ENCODE measurements at regions of chr14 and their contacts with region 1.

Region 1: DNA sequence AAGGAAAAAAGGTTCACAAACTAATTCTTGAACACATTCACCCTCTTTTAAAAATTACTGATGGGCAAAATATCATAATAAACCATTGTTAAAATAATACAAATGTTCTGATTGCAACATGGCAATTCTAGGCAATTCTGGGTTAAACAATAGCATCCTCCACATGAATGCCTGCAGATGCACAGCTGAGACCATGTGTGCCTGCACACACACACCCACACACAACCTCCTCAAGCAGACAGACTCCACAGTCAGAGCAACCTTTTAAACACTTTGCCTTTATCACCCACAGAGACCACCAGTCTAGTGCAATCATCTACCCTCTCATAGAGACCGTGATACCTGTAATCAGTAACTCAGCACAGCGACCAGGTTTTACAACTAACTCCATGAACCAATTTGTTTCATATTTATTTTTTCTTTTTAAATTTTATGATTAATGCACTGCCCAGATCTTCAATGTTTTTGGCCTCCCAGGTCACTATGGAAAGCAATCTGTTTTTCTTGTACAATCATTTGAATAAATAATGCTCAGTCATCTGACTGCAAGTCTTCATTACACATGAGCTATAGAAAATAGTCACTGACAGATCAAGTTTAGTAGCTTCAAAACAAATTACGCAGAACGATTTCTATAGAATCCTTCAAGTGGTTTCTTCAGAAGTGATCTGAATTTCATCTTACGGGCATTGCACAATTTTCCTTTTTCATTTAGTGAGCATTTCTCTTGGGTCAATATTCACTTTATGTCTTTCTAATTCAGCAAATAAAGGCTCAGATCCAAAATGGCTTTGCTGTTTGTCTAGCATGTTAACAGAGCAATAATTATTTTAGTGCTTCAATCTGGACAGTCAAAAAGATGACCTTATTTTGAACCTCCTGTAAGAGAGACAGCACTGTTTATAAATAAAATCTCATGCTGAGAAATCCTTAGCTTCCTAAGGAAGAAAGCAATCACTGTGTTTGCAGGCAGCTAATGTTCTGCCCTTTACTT is 105.7 kb downstream of the PRKD1 start:
- DNase-seq: no peak
- ATAC-seq: no peak

Region 2: GRCh38 chr14:29663281-29663801 is 158.6 kb before region 1 on chr14:
- intact Hi-C with region 1: no loop called
- DNase-seq: no peak
- ATAC-seq: no peak

Region 3: DNA sequence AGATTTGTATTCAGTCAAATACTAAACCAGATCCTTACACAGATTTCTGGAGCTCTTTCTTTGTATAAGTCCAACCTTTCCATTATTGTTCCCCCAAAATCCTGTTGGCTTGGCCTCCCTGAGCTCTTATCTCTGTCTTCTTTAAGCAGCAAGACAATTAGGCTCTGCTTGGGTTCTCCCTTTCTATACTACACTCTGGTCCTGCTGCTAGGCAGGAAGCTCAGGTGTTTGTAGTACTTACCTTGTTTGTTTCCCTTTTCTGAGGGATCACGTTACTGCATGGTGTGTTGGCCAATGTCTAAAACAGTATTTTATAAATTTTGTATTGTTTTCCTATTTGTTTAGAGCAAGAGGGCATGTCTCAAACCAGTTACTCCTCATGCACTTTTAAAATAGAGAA is 87.2 kb before region 1 on chr14:
- intact Hi-C with region 1: loop called (anchors 10 kb)
- DNase-seq: no peak
- ATAC-seq: no peak

Measured in left ventricle myocardium superior (tissue), 1 donor.